Left colon (tissue), 2 donors: ENCODE measurements at regions of chr19 and their contacts with region 1.

Region 1: GRCh38 chr19:44845612-44846454 is at the start of gene NECTIN2:
- DNase-seq: peak; percentile 99 to 100
- ATAC-seq: peak; percentile 73
- total RNA-seq, gene NECTIN2: 112 to 125 TPM

Region 2: DNA sequence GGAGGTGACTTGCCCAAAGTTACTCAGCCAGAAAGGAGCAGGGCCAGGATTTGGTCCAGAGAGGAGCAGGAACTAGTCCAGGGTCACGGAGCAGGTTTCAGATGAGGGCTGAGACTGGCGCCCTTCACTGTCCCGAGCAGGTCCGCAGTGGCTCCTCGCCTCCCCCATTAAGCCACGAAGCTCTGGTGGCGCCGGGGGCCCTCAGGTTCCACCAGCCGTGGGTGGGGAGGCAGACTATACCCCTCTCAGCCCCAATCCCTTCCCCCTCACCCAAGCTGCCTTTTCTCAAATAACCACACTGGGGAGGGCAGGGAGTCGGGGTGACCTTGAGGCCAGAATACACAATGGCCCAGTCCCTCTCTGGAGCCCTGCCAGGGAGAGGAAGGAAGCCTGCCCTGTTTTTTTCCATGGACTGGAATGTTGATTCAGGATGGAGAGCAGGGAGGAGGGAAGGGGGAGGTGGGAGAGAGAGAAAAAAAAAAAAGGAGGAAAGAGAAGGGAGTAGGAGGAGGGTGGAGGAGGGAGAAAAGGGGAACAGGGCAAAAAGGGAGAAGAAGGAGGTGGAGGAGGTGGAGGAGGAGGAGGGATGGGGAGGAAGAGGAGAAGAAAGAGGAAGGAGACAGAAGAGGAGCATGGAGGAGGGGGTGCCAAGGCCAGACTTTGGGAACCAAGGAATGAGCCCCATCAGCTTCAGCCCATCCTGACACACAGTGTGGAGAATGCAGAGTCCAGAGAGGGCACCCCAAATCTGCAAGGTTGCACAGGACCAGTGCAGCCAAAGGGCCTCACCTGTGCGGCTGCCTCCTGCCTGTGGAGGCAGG is 127.2 kb before region 1 on chr19:
- intact Hi-C with region 1: loop called in 1 of 2 experiments (anchors 10 kb)
- DNase-seq: peak; percentile 83 to 84
- ATAC-seq: peak; percentile 86

Region 3: GRCh38 chr19:44800461-44800860 is 45.4 kb before region 1 on chr19:
- intact Hi-C with region 1: loop called (anchors 5 to 10 kb)
- DNase-seq: peak; percentile 70 to 89
- ATAC-seq: peak; percentile 79

Region 4: GRCh38 chr19:44890366-44891015 is 44.7 kb after region 1 on chr19:
- intact Hi-C with region 1: no loop called
- DNase-seq: peak in 1 of 2 donors; percentile 100
- ATAC-seq: peak; percentile 83